ENCODE measurements at regions of chr10 and their contacts with region 1.

Region 1: DNA sequence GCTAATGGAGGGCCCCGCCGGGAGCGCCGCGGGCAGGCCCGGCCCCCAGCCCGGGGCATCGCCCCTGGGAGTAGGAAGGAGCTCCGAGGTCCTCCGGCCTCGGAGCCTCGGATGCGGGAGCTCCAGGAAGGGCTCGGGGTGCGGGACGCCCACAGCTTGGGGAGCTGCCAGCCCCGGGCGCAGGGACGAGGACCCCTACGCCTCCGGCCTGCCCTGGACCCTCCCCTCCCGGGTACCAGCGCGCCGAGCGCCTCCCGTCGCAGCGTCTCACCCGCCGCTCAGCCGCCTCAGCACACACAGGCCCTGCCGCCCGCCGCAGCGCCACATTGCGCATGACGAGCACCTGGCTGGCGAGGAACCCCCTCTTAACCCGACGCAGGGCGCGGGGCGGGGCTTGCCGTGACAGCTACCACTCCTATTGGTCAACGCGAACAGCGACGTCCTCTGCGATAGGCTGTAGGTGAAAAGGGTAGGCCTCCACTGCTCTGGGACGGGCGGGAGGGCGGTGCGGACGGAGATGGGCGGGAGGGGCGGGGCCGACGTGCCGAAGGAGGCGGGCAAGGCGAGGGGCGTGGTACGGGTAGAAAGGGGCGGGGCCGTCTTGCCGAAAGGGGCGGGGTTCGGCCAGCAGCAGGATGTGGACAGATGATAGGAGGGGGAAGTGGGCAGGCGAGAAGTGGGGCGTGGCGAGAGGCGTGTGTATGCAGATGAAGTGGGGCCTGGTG is at the start of gene PITRM1:
- DNase-seq: peak; percentile 74
- ATAC-seq: peak; percentile 99
- H3K4me3 ChIP-seq: peak within 1 kb of the TSS; percentile 79 to 85
- H3K27ac ChIP-seq: peak within 1 kb of the TSS; percentile 82
- H3K4me1 ChIP-seq: peaks cover 4% of the 10 kb centered on the region; the same call in 1 of the 2 replicates
- H3K27me3 ChIP-seq: no peaks in the 10 kb centered on the region
- CTCF ChIP-seq: no peak
- total RNA-seq, gene PITRM1: 63.5 TPM

Region 2: GRCh38 chr10:3025300-3025699 is 147.3 kb before region 1 on chr10:
- CTCF ChIA-PET with region 1: no interaction called
- POLR2A ChIA-PET with region 1: no interaction called
- in situ Hi-C with region 1: no loop called
- intact Hi-C with region 1: no loop called
- DNase-seq: no peak
- ATAC-seq: no peak
- H3K4me3 ChIP-seq: no peak overlapping the region
- H3K27ac ChIP-seq: no peak overlapping the region
- H3K4me1 ChIP-seq: no peaks in the 10 kb centered on the region
- H3K27me3 ChIP-seq: peaks cover 4% of the 10 kb centered on the region
- CTCF ChIP-seq: no peak

Region 3: DNA sequence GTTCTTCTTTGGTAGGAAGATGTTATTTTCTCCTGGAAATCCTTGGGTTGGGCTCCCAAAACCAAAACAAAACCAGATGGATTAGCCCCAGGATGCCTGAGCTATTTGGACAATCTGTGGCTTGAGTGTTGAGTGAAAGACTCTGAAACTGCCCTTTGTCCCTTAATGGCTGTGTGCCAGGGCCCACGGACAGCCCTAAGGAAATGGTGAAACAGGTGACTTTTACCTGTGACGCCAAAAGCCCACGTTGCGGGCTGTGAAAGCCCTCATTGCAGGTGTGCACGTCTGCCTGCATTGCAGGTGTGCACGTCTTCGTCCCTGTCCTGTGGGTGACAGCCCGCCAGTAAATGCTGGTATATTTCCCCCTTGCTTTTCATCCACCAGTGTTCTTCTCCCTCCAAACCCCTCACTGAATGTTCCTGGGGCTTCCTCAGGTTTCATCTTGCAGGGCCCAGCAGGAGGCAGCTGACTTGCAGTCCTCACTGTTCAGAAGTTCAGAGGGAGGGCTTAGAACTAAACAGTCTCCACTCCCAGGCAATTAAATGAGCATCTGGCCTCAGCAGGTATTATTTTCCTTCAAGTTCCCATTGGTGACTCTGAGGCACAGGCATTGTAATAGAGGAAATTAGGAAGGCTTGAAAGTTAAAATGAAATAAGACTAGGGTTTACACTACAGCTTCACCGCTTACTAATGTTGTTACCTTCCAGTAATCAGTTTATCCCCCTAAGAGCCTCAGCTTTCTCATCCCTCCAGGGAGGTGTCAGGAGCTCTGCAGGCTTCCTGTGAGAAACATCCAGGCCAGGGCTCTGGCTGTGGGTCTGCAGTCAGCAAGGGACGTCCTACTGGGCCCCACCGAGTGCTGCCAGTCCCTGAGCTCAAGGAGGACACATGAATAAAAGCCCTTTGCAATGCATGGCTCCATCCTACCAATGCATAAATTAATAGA is 94.4 kb before region 1 on chr10:
- CTCF ChIA-PET with region 1: no interaction called
- POLR2A ChIA-PET with region 1: interaction called, 16 read pairs
- in situ Hi-C with region 1: no loop called
- intact Hi-C with region 1: no loop called
- DNase-seq: no peak
- ATAC-seq: no peak
- H3K4me3 ChIP-seq: no peak overlapping the region
- H3K27ac ChIP-seq: peak overlapping the region; percentile 59
- H3K4me1 ChIP-seq: peaks cover 52% of the 10 kb centered on the region
- H3K27me3 ChIP-seq: no peaks in the 10 kb centered on the region
- CTCF ChIP-seq: no peak

Region 4: DNA sequence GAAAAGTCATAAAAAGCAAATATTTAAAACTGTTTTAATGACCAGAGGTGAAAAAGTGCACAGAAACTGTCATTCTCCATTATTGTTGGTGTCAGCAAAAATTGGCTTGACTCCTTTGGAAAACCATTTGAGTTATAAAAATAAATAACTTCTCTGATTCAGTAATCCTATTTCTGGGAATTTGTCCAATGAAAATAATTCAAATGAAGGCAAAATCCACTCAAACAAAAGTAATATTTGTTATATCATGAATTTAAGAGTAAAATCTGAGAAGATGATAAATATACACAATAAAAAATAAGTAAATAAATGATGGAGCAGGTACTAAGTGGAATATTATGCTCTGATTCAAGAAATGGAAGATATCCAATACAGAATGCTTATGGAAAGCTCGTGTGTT is 939.0 kb after region 1 on chr10:
- CTCF ChIA-PET with region 1: no interaction called
- POLR2A ChIA-PET with region 1: interaction called, 10 read pairs
- in situ Hi-C with region 1: no loop called
- intact Hi-C with region 1: no loop called
- DNase-seq: no peak
- ATAC-seq: no peak
- H3K4me3 ChIP-seq: no peak overlapping the region
- H3K27ac ChIP-seq: no peak overlapping the region; the same call in 1 of the 2 replicates
- H3K4me1 ChIP-seq: no peaks in the 10 kb centered on the region
- H3K27me3 ChIP-seq: no peaks in the 10 kb centered on the region
- CTCF ChIP-seq: no peak

Measured in Panc1 (cell line).